HEK293 (cell line): ENCODE measurements at regions of chr4 and their contacts with region 1.

Region 1: DNA sequence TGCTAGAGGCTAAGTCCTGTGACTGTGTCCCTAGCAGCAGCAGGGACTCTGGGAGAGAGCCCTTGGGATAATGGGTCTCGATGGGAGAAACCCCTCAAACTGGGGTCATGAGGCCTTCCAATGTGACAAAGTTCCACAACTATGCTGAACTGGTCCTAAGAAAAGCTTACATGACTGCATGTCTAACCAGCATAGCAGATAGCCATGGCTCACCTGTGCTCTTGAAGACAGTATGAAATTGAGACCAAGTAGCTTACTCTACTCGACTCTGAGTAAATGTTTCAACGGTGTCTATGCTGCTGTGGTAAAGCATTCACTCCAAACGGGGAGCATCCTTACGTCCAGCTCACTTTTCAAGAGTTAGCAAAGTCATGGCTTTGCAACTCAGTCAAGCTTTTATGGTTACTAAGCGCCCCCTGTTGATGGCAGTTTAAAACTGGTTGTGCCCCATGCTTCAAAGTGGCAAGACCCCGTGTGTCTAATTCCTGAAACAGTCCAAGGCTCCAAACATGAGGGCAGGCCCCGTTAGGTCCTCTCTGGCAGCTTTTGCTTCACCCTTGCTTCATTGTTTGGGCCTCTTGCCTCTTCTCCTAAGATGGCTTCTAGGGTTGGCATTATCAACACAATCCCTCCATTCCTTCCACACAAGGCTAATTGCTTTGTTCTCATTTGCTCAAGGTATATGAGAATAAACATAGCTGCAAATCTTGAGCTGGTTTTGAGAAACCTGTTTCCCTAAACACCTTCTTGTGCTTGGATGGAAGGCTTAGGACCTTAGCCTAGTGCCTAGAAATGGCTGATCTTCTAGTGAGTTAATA is 46.6 kb downstream of the CCNG2 start:
- H3K4me3 ChIP-seq: no peak overlapping the region
- H3K27ac ChIP-seq: no peak overlapping the region
- H3K4me1 ChIP-seq: no peaks in the 10 kb centered on the region
- CTCF ChIP-seq: 0 out of 2 replicates have a peak, but pooled peaks have one; percentile 22

Region 2: GRCh38 chr4:77044461-77045150 is 159.0 kb before region 1 on chr4:
- CTCF ChIA-PET with region 1: interaction called, 21 read pairs
- POLR2A ChIA-PET with region 1: no interaction called
- H3K4me3 ChIP-seq: no peak overlapping the region
- H3K27ac ChIP-seq: no peak overlapping the region
- H3K4me1 ChIP-seq: no peaks in the 10 kb centered on the region
- CTCF ChIP-seq: no peak

Region 3: DNA sequence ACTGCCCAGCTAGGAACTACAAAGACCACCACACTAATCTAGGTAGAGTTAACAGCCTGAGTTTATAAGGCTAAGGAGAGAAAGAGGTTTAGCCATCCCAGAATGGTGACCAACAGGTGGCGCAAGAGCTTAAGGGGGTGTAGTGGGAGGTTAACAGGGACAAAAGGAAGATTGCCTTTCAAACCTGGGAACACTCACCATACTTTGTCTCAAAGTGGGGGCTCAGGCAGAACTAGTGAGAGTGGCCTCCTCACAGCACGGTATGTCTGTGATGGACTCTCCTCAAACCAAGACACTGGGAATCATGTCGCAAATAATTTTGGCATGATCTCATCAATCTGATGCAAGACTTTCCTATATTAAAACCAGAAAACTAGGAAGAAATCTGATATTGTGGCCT is 151.2 kb before region 1 on chr4:
- CTCF ChIA-PET with region 1: interaction called, 33 read pairs
- POLR2A ChIA-PET with region 1: no interaction called
- H3K4me3 ChIP-seq: no peak overlapping the region
- H3K27ac ChIP-seq: no peak overlapping the region
- H3K4me1 ChIP-seq: no peaks in the 10 kb centered on the region
- CTCF ChIP-seq: 0 out of 2 replicates have a peak, but pooled peaks have one; percentile 23

Region 4: DNA sequence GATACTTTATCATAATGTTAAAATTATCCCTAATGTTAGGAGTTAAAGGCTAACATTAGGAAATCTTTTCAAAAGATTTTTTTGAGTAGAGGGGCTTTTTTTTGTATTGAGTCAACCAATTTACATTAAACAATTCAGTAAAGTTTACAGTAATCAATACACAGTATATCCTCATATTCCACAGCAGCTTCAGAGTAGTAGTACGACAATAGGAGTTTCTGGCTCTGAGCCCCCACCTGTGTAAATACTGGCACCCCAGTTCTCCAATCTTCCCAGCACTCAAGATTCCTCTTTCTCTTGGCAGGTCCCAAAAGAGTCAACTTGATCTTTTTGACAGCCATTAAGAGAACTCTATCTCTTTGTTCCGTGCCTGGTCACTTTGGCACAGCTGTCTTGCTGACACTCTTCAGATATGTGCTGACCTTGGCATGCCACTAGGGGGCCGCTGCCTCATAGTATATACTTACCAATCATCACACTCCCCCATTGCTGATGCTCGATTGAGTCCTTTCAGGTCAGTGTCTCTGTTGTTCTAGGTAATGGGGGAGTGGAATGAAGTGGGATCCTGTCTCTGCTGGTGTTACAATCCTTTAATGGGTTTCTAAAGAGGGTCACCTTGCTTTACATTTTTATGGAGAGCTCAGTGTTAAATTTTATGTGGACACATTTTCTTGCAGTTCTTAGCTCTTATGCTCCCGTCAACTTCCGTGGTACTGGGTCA is 108.3 kb before region 1 on chr4:
- CTCF ChIA-PET with region 1: interaction called, 66 read pairs
- POLR2A ChIA-PET with region 1: no interaction called
- H3K4me3 ChIP-seq: no peak overlapping the region
- H3K27ac ChIP-seq: no peak overlapping the region
- H3K4me1 ChIP-seq: no peaks in the 10 kb centered on the region
- CTCF ChIP-seq: peak; percentile 41; the same call in 1 of the 2 replicates

Region 5: DNA sequence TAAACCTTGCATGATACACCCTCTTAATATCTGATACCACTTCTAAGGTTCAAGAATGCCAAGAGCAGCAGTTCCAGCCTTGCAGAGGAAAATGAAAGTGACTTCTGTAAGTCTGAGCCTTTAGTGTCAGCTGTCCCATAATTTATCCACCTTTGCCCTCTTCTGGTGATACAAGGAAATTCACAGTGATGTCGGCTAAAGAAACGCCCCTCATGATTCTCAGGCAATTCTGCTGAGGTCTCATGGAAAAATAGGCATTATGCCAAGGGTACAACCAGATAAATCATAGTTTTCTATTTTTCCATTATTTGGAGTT is 229.8 kb after region 1 on chr4:
- CTCF ChIA-PET with region 1: no interaction called
- POLR2A ChIA-PET with region 1: no interaction called
- H3K4me3 ChIP-seq: no peak overlapping the region
- H3K27ac ChIP-seq: no peak overlapping the region
- H3K4me1 ChIP-seq: no peaks in the 10 kb centered on the region
- CTCF ChIP-seq: no peak